ENCODE measurements at regions of chr2 and their contacts with region 1.

Region 1: DNA sequence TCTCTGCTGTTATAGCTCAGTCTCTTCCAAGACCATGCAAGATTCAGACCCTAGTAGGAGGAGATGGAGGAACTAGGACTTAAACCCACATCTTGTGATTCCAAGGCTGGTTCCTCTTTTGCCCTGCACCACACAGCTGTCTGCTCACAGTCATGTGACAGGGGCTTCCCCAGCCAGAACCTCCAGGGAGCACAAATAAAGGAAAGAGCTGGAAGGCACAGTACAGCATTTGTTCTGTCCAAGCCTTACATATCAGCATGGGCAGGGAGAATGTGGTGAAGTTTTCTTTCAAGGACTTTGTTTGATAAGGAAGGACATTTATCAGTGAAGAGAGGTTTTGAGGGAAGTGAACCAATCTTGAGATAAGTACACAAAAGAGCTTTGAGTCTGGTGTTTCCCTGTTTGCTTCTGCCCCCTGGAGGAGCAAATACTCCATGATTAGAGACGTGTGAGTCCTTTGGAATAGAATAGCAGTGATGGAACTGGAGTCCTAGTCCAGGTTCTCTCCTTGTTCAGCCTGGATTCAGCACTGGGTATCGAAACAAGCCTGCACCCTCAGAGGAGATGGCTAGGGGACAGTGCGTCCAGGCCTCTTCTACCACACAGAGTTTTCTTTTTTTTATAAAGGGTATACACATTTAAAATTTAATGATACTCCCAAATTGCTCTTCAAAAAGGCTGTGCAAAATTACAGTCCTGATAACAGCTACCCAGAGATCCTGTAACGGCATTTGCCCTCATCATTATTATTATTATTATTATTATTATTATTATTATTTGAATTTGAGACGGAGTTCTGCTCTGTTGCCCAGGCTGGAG is 24.6 kb upstream of the CASP10 start:
- DNase-seq: peak; percentile 31
- H3K4me3 ChIP-seq: no peak overlapping the region
- H3K27me3 ChIP-seq: no peaks in the 10 kb centered on the region
- CTCF ChIP-seq: peak; percentile 71

Region 2: GRCh38 chr2:201118121-201118960 is 40.0 kb before region 1 on chr2:
- CTCF ChIA-PET with region 1: interaction called, 31 read pairs
- POLR2A ChIA-PET with region 1: no interaction called
- DNase-seq: no peak
- H3K4me3 ChIP-seq: peak overlapping the region; percentile 70
- H3K27me3 ChIP-seq: no peaks in the 10 kb centered on the region
- CTCF ChIP-seq: peak; percentile 49

Region 3: GRCh38 chr2:201136889-201137321 is 21.4 kb before region 1 on chr2:
- CTCF ChIA-PET with region 1: interaction called, 3 read pairs
- POLR2A ChIA-PET with region 1: interaction called, 13 read pairs
- DNase-seq: no peak
- H3K4me3 ChIP-seq: no peak overlapping the region
- H3K27me3 ChIP-seq: no peaks in the 10 kb centered on the region
- CTCF ChIP-seq: no peak

Measured in BJ (cell line).